MCF 10A (cell line): ENCODE measurements at regions of chr20 and their contacts with region 1.

Region 1: GRCh38 chr20:34538671-34539123 is 19.8 kb upstream of the MAP1LC3A start:
- DNase-seq: peak; percentile 62
- H3K4me3 Mint-ChIP-seq: no peak overlapping the region
- H3K27ac Mint-ChIP-seq: no peak overlapping the region
- H3K4me1 Mint-ChIP-seq: no peaks in the 10 kb centered on the region
- H3K27me3 Mint-ChIP-seq: no peaks in the 10 kb centered on the region
- CTCF ChIP-seq: peak; percentile 75

Region 2: DNA sequence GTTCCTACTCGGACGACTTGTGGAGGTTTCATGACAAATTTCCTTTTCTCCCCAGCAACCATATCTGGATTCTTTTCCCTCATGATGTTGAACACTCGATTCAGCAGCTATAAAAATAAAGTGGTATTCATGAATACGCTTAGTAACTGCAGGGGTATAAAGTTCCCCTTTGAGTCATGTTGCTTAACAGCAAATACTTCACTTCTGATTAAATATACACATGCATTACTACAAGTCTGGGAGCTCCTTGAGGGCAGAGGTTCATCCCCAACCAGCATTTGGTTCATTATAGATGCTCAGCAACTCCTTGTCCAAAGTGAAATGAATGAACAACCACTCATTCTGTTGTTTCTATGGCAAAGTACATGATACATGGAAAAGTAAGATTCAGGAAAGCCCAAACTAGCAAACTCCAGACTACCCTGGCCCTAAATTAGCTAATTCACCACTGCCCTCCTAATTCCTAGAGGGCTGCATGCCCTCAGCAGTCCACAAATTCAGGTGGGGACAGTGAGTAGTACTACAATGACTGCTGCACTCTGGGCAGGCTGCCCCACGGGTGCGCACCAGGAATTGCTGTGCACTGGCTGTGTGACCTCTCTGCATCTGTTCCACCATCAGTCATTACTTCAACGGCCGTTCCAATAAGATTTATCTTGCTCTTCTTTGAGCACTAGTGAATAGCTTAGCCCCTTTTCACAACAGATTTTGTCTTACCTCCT is 441.8 kb before region 1 on chr20:
- CTCF ChIA-PET with region 1: no interaction called
- POLR2A ChIA-PET with region 1: no interaction called
- intact Hi-C with region 1: no loop called
- DNase-seq: no peak
- H3K4me3 Mint-ChIP-seq: no peak overlapping the region
- H3K27ac Mint-ChIP-seq: no peak overlapping the region
- H3K4me1 Mint-ChIP-seq: no peaks in the 10 kb centered on the region
- H3K27me3 Mint-ChIP-seq: no peaks in the 10 kb centered on the region
- CTCF ChIP-seq: no peak

Region 3: GRCh38 chr20:34390769-34391452 is 147.8 kb before region 1 on chr20:
- CTCF ChIA-PET with region 1: no interaction called
- POLR2A ChIA-PET with region 1: no interaction called
- intact Hi-C with region 1: no loop called
- DNase-seq: peak; percentile 95
- H3K4me3 Mint-ChIP-seq: no peak overlapping the region
- H3K27ac Mint-ChIP-seq: peak overlapping the region; percentile 55
- H3K4me1 Mint-ChIP-seq: peaks cover 23% of the 10 kb centered on the region
- H3K27me3 Mint-ChIP-seq: no peaks in the 10 kb centered on the region
- CTCF ChIP-seq: no peak

Region 4: GRCh38 chr20:34549291-34549928 is 10.7 kb after region 1 on chr20:
- CTCF ChIA-PET with region 1: interaction called, 16 read pairs
- POLR2A ChIA-PET with region 1: interaction called, 3 read pairs
- intact Hi-C with region 1: no loop called
- DNase-seq: no peak
- H3K4me3 Mint-ChIP-seq: no peak overlapping the region
- H3K27ac Mint-ChIP-seq: no peak overlapping the region
- H3K4me1 Mint-ChIP-seq: peaks cover 11% of the 10 kb centered on the region
- H3K27me3 Mint-ChIP-seq: no peaks in the 10 kb centered on the region
- CTCF ChIP-seq: no peak